ENCODE measurements at regions of chr5 and their contacts with region 1.

Region 1: DNA sequence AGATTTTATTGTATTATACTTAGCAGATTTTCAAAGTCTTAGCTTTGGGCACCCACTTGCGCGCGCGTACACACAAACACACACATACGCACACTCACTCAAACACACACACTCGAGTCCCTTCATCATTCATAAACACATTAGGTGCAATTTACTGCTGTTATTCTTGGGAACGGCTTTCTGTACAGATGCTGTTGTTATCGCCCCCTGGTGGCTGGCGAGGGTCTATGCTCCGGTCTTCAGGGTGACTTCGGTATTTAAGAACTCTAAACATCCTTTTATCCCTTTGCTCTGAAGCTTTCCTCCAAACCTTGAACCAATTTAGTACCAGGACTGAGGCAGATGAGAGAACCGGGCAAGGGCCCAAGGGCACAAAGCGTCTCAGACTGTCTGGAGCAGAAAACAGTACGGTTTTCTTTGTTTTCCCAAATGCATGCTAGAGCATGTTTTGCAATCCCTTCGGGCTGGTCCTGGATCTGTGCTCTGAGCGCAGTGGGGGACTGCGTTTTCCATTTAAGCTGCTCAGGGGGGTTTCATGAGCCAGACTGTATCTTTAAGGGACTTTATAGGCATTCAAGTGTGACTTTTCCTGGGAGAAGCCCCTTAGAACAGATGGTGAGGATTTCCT is 1.7 kb upstream of the SLIT3 start:
- DNase-seq: peak in 1 of 2 experiments; percentile 83
- H3K4me3 ChIP-seq: no peak overlapping the region
- H3K27ac ChIP-seq: no peak overlapping the region
- H3K4me1 ChIP-seq: peaks cover 5 to 12% (median 7%) of the 10 kb centered on the region in 4 experiments; a peak in 6 of 7 replicates
- H3K27me3 ChIP-seq: peaks cover 7 to 41% (median 32%) of the 10 kb centered on the region in 4 experiments
- CTCF ChIP-seq: peak; percentile 73 to 93 (median 82)
- EP300 ChIP-seq: no peak
- POLR2A ChIP-seq: no peak
- RAD21 ChIP-seq: peak; percentile 77 to 78

Region 2: DNA sequence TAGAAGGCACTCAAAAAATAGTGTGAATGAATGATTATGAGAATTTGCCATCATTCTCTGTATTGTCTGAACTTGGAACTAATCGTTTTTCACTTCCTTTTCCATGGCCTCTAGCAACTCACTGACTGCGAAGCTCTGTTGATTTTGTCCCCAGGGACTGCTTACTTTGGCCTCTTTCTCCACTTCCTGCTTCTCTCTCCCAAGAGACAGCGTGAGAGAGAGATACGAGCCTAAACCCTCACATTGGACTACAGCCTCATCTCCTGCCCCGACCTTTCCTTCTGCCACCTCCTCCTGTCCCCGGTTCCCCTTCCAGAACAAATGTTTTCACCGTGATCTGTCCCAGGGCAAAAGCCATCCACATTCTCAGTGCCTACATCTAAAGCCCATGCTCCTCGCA is 422.7 kb before region 1 on chr5:
- CTCF ChIA-PET with region 1: no interaction called
- POLR2A ChIA-PET with region 1: no interaction called
- DNase-seq: no peak
- H3K4me3 ChIP-seq: no peak overlapping the region
- H3K27ac ChIP-seq: no peak overlapping the region
- H3K4me1 ChIP-seq: peaks cover 3 to 16% (median 7%) of the 10 kb centered on the region in 4 experiments
- H3K27me3 ChIP-seq: peaks cover 0 to 7% (median 4%) of the 10 kb centered on the region in 4 experiments; a peak in 4 of 7 replicates
- CTCF ChIP-seq: no peak
- EP300 ChIP-seq: no peak
- POLR2A ChIP-seq: no peak
- RAD21 ChIP-seq: no peak

Region 3: GRCh38 chr5:169272731-169273401 is 29.7 kb before region 1 on chr5:
- CTCF ChIA-PET with region 1: interaction called, 22 read pairs
- POLR2A ChIA-PET with region 1: no interaction called
- DNase-seq: no peak
- H3K4me3 ChIP-seq: no peak overlapping the region
- H3K27ac ChIP-seq: no peak overlapping the region
- H3K4me1 ChIP-seq: peaks cover 0 to 5% (median under 1%) of the 10 kb centered on the region in 4 experiments; a peak in 3 of 7 replicates
- H3K27me3 ChIP-seq: no peaks in the 10 kb centered on the region
- CTCF ChIP-seq: no peak
- EP300 ChIP-seq: no peak
- POLR2A ChIP-seq: no peak
- RAD21 ChIP-seq: no peak

Region 4: DNA sequence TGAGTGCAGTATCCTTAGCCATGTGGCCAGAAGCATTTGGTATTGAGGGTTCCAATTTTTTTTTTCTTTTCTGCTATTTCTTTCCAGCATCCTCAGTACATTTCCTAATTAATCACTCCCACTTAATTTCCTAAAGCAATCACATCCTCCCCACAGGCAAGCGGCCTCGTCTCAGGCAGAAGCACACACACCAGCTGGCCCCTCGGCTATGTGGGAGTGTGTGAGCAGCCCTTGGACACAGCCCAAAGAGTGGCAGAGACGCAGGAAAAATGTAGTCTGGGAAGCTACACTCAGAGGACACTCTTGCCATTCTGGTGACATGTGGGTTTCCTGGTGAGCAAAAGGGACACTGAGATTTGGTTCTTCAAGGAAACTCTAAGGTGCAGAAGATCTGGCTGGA is 22.3 kb before region 1 on chr5:
- CTCF ChIA-PET with region 1: interaction called, 15 read pairs
- POLR2A ChIA-PET with region 1: interaction called, 3 read pairs
- DNase-seq: no peak
- H3K4me3 ChIP-seq: no peak overlapping the region
- H3K27ac ChIP-seq: no peak overlapping the region
- H3K4me1 ChIP-seq: peaks cover 0 to 14% (median 5%) of the 10 kb centered on the region in 4 experiments; a peak in 5 of 7 replicates
- H3K27me3 ChIP-seq: no peaks in the 10 kb centered on the region; a peak in 1 of 7 replicates
- CTCF ChIP-seq: no peak
- EP300 ChIP-seq: no peak
- POLR2A ChIP-seq: no peak
- RAD21 ChIP-seq: no peak

Region 5: DNA sequence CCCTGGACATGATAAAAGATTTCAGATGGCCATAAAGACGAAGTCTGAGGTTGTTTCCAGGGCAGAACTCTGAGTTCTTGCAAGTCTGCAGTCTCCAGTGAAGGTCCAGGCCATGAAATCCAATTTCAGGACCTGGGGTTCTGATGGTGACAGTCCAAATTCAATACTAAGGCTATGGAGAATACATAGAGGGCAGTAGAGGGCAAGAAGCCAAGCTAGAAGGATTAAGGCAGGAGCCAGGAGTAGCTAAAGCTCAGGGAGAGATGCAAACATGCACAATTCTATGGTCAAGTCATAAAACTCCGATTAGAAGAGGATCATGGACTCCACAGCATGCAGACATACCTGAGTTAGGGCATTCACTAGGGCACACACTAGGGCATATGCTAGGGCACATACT is 13.1 kb before region 1 on chr5:
- CTCF ChIA-PET with region 1: interaction called, 31 read pairs
- POLR2A ChIA-PET with region 1: no interaction called
- DNase-seq: no peak
- H3K4me3 ChIP-seq: no peak overlapping the region
- H3K27ac ChIP-seq: no peak overlapping the region
- H3K4me1 ChIP-seq: no peaks in the 10 kb centered on the region
- H3K27me3 ChIP-seq: no peaks in the 10 kb centered on the region
- CTCF ChIP-seq: peak in 2 of 3 experiments; percentile 25 to 38; a peak in 2 of 4 replicates
- EP300 ChIP-seq: no peak
- POLR2A ChIP-seq: no peak
- RAD21 ChIP-seq: peak; percentile 33 to 44; a peak in 3 of 4 replicates

Region 6: GRCh38 chr5:169581580-169582227 is 279.1 kb after region 1 on chr5:
- CTCF ChIA-PET with region 1: interaction called, 11 read pairs
- POLR2A ChIA-PET with region 1: no interaction called
- DNase-seq: peak in 1 of 2 experiments; percentile 73
- H3K4me3 ChIP-seq: no peak overlapping the region
- H3K27ac ChIP-seq: no peak overlapping the region
- H3K4me1 ChIP-seq: no peaks in the 10 kb centered on the region
- H3K27me3 ChIP-seq: no peaks in the 10 kb centered on the region
- CTCF ChIP-seq: peak in 2 of 3 experiments; percentile 48 to 70; a peak in 2 of 4 replicates
- EP300 ChIP-seq: no peak
- POLR2A ChIP-seq: no peak
- RAD21 ChIP-seq: peak; percentile 73 to 74